BJ (cell line): ENCODE measurements at regions of chr1 and their contacts with region 1.

Region 1: DNA sequence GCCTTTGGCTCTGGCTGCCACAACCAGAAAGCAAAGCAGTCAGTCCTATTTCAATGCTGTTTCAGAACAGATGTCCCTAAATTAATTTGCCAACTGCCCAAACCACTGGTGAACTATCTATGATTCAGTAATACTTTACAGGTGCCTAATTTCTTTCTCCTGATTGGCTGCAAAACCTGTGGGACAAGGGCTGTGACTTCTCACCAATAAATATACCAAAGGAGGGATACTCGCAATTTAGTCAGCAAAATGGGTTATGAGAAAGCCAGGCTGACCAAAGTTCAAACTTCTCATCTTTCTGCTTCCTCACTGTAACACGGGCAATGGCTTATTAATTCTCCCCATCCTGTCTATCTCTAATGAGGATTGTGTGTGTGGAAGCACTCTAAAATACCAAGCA is 12.8 kb downstream of the GPN2 start:
- DNase-seq: no peak
- H3K4me3 ChIP-seq: no peak overlapping the region
- H3K27me3 ChIP-seq: no peaks in the 10 kb centered on the region
- CTCF ChIP-seq: no peak

Region 2: GRCh38 chr1:26602378-26602959 is 274.9 kb before region 1 on chr1:
- CTCF ChIA-PET with region 1: interaction called, 14 read pairs
- POLR2A ChIA-PET with region 1: no interaction called
- DNase-seq: no peak
- H3K4me3 ChIP-seq: no peak overlapping the region
- H3K27me3 ChIP-seq: peaks cover 2% of the 10 kb centered on the region; the same call in 1 of the 2 replicates
- CTCF ChIP-seq: peak; percentile 73

Region 3: GRCh38 chr1:26771643-26772321 is 105.5 kb before region 1 on chr1:
- CTCF ChIA-PET with region 1: no interaction called
- POLR2A ChIA-PET with region 1: no interaction called
- DNase-seq: peak; percentile 97
- H3K4me3 ChIP-seq: no peak overlapping the region
- H3K27me3 ChIP-seq: no peaks in the 10 kb centered on the region
- CTCF ChIP-seq: no peak

Region 4: DNA sequence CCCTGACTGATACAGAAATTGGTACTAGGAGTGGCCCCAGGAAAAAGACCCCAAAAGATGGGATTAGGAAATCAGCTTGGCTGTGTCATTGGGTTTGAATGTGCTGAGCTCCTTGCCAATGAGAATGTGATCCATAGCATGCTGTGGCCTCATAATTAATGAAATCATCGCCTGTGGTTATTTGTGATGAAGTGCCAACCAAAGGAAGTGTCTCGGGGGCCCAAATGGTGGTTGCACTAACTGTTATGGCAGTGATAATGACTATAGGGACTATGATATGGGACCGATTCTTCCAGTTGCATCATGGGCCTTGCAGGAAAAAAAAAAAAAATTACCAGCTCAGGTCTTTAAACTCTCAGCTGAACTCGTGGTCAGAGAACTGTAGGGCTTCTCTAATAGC is 66.3 kb before region 1 on chr1:
- CTCF ChIA-PET with region 1: interaction called, 22 read pairs
- POLR2A ChIA-PET with region 1: no interaction called
- DNase-seq: no peak
- H3K4me3 ChIP-seq: no peak overlapping the region
- H3K27me3 ChIP-seq: no peaks in the 10 kb centered on the region
- CTCF ChIP-seq: no peak

Region 5: DNA sequence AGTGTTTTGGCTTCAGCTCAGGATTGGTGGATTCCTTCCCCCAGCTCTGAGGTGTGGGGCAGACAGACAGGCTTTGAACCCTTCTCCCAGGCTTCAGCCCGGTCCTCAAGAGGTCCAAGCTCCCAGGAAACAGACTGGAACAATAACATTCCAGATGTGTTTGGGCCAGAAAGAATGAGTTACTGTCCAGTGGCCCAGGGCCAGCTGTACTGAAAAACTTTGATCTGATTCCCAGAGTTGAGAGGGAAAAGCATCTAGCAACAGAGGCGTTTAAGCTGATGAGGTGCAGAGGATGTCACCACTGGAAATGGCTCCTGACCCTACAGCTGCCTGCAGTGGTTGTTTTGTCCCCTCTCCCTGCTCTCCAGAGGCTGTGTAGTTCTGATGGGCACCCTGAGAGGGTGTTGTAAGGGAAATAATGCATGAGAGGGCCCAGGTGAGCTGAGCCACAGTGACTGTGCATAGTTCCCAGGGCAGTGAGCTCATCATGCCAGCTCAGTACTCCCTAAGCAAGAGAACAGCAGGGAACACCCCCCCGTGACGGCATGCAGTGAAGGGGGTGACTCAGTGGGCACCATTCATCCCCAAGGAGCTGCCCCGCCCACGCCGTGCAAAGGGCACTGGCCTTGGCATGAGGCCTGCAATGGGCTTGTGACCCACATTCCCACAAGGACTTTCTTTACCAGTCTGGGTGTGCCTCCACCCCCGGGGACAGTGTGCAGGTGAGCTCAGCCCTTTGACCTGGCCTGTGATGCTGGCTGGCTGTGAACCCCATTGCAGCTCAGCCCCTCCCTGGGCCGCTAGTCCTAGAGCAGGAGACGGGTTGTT is 28.2 kb before region 1 on chr1:
- CTCF ChIA-PET with region 1: interaction called, 10 read pairs
- POLR2A ChIA-PET with region 1: no interaction called
- DNase-seq: no peak
- H3K4me3 ChIP-seq: no peak overlapping the region
- H3K27me3 ChIP-seq: no peaks in the 10 kb centered on the region
- CTCF ChIP-seq: no peak

Region 6: DNA sequence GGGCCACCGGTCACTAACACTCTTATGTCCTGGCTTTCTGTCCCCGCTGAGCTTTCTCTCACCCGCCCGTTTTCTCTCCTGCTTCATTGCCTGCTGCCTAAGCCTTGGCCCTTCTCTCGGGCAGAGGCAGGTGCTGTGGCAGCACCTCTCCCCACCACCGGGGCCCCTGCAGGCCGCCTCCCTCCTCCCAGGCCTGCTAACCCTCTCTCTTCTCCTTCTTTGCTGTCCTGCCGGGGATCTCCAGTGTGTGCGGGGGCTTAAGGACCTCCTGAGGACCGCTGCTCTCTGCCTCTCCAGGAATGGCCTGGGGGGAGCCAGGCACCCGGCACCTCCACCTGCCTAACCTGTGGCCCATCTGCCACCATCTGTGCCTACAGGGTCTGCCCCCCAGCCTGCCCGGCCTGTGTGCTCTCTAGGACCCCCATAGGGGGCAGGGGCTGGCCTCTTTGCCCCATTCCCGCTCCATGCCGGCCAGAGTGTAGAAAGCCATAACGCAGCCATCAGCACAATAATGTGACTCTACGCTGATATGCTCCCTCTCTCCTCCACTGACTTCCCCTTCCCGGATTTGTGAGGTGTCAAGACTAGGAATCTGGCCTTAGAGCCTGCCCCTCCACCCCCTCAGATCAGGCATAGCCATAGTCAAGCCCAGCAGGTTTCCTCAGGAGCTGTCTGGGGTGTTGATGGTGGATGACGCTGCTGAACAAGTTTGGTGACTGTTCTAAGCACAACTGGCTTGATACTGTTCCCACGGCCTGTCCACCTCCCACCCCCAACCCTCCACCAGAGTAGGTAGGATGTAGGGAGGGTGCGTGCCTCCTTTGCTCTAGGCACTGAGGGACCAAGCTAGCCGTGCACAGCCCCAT is 20.5 kb before region 1 on chr1:
- CTCF ChIA-PET with region 1: interaction called, 14 read pairs
- POLR2A ChIA-PET with region 1: no interaction called
- DNase-seq: no peak
- H3K4me3 ChIP-seq: no peak overlapping the region
- H3K27me3 ChIP-seq: no peaks in the 10 kb centered on the region
- CTCF ChIP-seq: no peak

Region 7: DNA sequence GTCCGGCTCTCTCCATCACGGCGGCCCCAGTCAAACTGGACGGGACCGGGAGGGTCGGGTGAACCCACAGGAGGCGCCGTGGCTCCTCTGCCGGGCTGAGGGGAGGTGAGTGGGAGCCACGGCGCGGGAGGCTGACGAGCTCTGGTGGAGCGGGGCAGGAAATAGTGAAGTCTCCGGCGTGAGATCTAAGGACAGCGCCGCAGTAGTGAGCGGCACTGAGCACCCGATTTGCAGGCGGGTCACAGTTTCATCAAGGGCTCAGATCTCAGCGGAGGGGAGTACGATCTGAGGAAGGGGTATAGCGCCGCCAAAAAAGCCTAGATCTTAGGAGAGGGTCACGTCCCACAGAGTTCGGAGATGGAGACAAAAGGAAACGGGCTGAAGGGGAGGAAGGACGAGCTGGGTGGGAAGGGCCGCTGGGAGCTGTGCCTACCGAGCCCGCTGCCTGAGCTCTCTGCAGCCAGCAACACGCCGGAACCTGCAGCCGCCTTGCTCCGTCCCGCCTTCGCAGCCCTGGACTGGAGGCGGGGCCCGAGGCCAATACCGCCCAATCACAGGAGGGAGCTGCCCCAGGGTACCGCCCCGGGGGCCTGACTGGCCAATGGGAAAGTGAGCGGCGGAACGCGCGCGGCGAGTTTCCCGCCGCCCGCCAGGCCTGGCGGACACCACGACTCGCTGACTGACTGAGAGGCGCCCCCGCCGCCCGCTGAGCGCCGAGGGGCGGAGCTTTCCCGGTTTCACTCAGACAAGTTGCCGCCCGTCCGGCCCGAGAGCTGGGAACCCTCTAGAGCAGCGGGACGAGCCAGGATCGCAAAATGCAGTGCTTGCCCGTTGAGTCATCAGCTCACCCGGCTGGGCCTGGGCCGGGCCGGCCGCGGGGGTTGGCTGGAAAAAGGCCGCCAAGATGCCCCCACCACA is 12.5 kb before region 1 on chr1:
- CTCF ChIA-PET with region 1: interaction called, 10 read pairs
- POLR2A ChIA-PET with region 1: no interaction called
- DNase-seq: peak; percentile 96
- H3K4me3 ChIP-seq: peak overlapping the region; percentile 47
- H3K27me3 ChIP-seq: no peaks in the 10 kb centered on the region
- CTCF ChIP-seq: peak; percentile 27; the same call in 1 of the 2 replicates

Region 8: DNA sequence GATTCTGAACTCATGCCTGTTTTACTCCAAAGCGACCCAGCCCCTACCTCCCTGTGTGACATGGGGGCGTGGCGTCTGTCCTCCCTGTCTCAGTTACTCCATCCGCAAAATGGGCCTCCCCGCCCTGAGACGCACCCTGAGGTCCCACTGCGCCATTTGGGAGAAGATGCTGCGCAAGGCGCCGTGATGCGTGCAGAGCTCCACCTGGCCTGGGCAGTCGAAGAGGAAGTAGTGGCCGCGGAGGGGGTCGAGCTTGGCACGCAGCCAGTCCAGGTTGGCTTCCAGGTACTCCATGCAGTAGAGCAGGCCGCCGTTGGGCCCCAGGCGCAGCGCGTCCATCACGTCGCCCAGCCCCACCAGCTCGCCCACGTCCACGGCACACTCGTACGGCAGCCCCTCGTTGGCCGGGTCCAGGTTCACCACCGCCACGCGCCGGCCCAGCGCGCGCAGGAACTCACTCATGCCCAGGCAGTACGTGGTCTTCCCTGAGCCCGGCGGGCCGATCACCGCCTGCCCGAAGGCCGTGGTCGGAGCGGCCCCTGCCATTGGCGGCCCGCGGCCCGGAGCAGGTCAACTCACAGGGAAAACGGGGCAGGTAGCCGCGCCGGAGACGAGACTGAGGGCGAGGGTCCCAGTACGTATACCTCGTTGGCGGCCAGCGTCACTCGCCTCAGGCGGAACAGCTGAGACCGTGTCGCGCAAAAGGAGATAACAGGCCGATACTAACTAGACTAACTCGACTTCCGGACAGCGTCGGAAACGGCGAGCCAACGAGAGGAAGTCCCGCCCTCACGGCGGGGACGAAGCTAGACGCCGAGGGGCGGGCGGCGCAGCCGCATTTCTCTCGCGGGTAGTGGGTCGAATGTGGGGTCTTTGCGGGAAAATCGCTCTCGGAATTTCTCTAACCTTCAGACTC is 12.5 kb after region 1 on chr1 and contains the start of gene GPN2:
- CTCF ChIA-PET with region 1: interaction called, 18 read pairs
- POLR2A ChIA-PET with region 1: no interaction called
- DNase-seq: peak; percentile 29
- H3K4me3 ChIP-seq: peak within 1 kb of the TSS; percentile 97
- H3K27me3 ChIP-seq: no peaks in the 10 kb centered on the region
- CTCF ChIP-seq: no peak
- polyA plus RNA-seq, gene GPN2: 35.3 and 44.9 TPM in 2 replicates